ENCODE measurements at regions of chr13 and their contacts with region 1.

Region 1: DNA sequence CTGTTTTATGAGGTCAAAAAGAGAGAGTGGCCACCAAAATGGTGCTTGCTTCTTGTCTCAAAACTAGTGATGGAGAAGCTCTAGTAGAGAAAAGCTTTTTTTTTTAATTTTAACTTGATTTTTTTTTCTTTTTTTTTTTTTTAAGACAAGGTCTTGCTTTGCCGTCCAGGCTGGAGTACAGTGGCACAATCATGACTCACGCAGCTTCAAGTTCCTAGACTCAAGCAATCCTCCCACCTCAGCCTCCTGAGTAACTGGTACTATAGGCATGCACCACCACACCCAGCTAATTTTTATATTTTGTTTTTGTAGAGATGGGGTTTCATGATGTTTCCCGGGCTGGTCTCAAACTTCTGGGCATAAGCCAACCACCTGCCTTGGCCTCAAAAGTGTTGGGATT is 279.0 kb downstream of the TBC1D4 start:
- DNase-seq: no peak
- CTCF ChIP-seq: no peak

Region 2: GRCh38 chr13:75161804-75162203 is 41.2 kb before region 1 on chr13:
- CTCF ChIA-PET with region 1: no interaction called
- POLR2A ChIA-PET with region 1: no interaction called
- DNase-seq: no peak
- CTCF ChIP-seq: no peak

Region 3: GRCh38 chr13:75219479-75220237 is 16.7 kb after region 1 on chr13:
- CTCF ChIA-PET with region 1: interaction called, 12 read pairs
- POLR2A ChIA-PET with region 1: no interaction called
- DNase-seq: peak; percentile 87
- CTCF ChIP-seq: peak; percentile 98

Measured in GM10248 (cell line).